Posterior cingulate gyrus (tissue), 11 donors: ENCODE measurements at regions of chr7 and their contacts with region 1.

Region 1: GRCh38 chr7:75914730-75915585 is at the start of gene POR:
- DNase-seq: peak; percentile 94 to 100 (median 97)

Region 2: DNA sequence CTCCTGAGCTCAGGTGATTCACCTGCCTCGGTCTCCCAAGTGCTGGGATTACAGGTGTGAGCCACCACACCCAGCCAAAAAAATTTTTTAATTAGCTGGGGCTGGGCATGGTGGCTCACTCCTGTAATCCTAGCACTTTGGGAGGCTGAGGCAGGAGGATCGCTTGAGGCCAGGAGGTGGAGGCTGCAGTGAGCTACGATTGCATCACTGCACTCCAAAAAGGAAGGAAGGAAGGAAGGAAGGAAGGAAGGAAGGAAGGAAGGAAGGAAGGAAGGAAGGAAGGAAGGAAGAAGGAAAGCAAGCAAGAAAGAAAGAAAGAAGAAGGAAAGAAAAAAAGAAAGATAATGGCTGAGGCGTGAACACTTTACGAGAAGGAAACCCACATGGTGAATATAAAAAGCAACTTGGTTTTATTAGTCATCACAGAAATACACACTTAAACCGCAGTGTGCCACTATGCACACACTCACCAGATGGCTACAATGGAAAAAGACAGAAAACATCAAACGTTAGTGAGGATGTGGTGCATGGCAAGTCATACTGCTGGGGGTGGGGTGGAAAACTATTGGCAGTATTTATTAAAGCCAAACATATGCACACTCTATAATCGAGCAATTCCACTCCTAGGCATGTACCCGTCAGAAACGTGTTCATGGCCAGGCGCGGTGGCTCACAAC is 138.5 kb before region 1 on chr7:
- intact Hi-C with region 1: no loop called
- DNase-seq: no peak

Region 3: DNA sequence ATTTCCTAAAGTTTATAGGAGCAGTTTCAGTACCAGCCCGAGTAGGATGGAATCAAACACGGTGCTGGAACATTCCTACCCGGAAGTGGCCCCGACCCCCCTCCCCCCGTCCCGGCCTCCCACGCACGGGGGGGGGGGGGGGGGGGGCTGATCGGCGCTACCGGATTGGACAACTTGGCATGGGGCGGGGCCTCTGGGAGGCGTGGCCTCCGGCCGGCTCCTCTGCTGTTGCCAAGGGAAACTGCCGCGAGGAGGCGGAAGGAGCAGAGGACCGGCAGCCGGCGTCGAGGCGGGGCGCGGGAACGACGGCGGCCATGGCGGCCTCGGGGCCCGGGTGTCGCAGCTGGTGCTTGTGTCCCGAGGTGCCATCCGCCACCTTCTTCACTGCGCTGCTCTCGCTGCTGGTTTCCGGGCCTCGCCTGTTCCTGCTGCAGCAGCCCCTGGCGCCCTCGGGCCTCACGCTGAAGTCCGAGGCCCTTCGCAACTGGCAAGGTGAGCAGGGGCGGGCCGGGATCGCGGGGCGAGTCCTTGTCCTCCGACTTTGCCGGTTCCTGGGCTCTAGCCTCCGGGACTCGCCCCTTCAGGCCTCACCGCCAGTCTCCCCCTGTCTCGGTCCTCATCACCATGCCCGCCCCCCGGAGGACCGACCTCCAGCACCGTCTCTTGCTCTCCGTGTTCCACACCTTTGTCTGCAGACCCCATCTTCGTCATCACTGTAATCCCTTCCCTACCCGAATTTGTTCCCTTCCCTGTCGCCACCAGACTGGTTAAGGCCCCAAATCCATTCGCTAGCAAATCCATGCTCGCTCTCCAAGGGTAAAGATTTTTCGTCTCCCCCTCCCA is 36.0 kb before region 1 on chr7 and contains the start of gene RHBDD2:
- intact Hi-C with region 1: loop called (anchors 2 kb)
- DNase-seq: peak; percentile 90 to 99 (median 94)